BJ (cell line): ENCODE measurements at regions of chr5 and their contacts with region 1.

Region 1: DNA sequence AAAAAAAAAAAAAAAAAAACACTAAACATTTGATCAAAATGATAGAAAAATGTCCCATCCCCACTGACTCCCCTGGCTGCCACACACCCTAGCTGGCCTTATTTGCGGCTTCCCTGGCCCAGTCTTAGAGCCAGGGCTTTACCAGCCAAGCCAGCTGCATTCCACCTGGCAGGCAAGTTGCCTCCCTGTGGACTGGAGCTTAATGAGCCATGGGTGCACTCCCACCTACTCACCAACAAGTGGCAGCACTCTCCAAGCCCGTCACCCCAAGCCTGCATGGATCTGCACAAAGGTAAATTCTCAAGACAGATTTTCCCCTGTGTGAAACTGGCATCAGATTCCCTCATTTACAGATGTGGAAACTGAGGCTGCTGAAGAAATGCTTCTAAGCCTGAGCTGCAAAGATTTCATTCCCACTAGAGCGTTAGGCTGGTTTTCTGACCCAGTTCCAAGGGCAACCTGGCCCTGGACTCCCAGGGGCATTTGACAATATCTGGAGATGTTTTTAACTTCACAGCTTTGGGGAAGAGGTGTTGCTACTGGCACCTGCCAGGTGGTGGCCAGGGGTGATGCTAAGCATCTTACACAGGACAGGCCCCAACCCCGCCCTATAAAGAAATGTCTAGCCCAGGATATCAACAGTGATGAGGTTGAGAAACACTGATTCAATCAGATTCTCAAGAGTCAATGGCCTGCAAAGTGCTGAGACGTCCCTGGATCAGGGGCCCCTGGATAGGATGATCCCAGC is 21.9 kb upstream of the VDAC1 start:
- DNase-seq: no peak
- H3K4me3 ChIP-seq: no peak overlapping the region
- H3K27me3 ChIP-seq: peaks cover 19% of the 10 kb centered on the region
- CTCF ChIP-seq: peak; percentile 56

Region 2: DNA sequence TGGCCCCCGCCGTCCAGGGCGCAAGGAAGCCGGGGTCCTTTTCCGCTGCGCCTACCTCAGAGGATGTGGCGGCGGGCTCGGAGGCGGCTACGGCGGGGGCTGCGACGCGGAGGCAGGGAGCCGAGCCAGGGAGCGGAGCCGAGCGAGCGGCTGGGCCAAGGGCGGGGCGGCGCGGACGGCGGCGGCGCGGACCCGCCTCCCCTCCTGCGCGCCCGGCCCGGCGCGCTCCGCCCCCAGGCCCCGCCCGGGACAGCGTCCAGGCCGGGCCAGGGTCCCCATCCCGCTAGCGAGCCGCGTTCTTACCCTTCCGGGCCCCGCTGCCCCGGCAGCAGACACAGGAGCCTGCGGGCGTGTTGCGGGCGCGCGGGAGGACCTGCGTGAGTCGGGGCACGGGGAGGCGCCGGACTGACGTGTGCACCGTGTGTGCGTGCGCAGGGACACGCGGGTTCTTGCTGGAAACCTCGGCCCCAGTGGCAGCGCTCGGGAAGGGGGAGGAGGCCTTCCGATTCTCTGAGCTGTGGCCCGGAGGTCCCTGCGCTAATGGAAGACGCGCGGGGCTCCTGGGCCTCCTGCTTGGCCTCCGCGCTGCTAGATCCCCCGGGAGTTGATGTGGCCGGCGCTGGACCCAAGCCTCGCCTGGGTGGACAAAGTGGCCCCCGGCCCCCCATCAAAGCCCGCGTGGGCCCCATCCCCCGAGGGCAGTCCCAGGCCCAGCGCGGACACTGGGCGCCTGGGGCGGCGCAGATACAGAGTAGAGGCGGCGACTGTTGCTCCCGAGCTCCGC is 21.9 kb before region 1 on chr5 and contains the start of gene VDAC1:
- CTCF ChIA-PET with region 1: interaction called, 6 read pairs
- POLR2A ChIA-PET with region 1: interaction called, 13 read pairs
- DNase-seq: peak; percentile 26
- H3K4me3 ChIP-seq: peak within 1 kb of the TSS; percentile 74
- H3K27me3 ChIP-seq: no peaks in the 10 kb centered on the region
- CTCF ChIP-seq: no peak
- polyA plus RNA-seq, gene VDAC1: 187 and 195 TPM in 2 replicates

Region 3: GRCh38 chr5:134609232-134609851 is 582.6 kb after region 1 on chr5:
- CTCF ChIA-PET with region 1: no interaction called
- POLR2A ChIA-PET with region 1: no interaction called
- DNase-seq: no peak
- H3K4me3 ChIP-seq: no peak overlapping the region
- H3K27me3 ChIP-seq: no peaks in the 10 kb centered on the region
- CTCF ChIP-seq: no peak